Ascending aorta (tissue), 2 donors: ENCODE measurements at regions of chr19 and their contacts with region 1.

Region 1: DNA sequence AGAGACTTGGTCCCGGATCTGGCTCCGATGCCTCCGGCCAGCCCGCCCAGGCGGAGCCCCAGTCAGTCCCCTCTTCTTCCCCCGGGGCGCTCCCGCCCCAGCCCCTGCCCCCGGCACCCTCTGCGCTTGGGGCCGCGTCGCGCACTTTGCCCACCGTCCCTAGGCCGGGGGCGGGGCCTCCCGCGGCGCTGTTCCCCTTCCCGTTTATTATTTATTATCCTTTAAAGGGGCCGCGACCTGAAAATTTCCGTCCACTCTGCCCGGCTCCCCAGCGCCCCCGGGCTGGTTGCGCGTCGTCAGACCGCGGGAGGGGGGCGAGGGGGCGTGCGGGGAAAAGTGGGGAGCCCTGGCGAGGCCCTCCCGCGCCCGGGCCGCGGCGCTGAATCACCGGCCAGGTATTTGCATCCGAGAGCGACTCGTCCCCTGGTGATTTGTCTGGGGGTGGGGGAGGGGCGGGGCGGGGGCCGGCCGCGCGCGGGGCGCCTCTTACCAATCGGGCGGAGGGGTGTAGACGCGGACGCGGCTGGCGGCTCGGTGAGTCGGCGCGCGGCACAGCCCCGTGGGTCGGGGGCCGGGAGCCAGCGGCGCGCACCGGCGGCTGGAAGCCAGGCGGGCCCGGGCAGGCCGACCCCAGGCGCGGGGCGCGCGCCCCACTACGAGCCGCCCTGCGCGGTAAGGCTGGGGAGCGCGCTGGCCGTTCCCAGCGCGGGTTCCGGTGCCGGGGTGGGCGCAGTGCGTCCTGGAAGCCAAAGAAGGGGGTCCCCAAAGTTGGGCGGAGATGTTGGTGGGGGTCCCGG is at the start of gene ARID3A:
- DNase-seq: peak in 1 of 2 donors; percentile 88
- H3K4me3 ChIP-seq: peak within 1 kb of the TSS; percentile 95 to 98
- H3K27ac ChIP-seq: peak within 1 kb of the TSS; percentile 59 to 71
- H3K4me1 ChIP-seq: peaks cover 5 to 16% of the 10 kb centered on the region in 2 donors
- H3K27me3 ChIP-seq: no peaks in the 10 kb centered on the region
- CTCF ChIP-seq: no peak
- total RNA-seq, gene ARID3A: 55.3 TPM

Region 2: DNA sequence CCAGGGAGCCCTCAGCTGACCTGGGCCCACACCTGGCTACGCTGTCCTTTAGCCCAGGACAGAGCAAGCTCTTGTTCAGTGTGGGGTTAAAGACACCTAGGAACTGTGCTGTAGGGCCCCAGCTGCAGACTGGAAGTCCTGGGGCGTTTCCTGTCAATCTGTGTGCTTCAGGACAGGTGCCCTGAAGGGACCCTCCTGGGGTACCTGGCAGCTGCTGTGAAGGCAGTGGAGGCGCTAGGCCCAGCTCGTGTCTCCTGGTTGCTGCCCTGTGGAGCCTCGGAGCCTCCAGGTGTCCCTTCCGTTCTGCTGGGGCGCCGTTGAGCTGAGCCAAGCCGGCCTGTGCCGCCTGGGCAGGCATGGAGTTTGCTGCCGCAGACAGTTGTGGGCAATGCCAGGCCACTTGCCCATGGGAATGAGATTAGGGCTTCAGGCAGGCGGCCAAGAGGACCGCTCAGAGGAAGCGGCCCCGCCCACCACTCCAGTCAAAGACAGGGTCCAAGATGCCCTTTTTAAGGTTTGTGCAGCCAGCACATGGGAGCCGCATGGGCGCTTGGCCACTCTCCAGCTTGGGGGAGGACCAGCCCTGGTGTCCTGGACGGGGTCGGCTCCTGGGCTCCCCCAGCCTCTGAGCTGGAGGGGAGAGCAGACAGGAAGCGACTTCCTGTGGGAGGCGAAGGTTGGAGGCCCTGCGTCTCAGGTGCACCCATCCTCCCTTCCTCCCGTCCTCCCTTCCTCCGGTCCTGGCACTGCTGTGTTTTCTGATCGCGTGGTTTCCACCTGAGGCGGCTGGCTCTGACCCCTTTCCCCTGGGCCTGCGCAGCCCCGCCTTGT is 124.5 kb before region 1 on chr19:
- intact Hi-C with region 1: no loop called
- DNase-seq: peak; percentile 30 to 82
- H3K4me3 ChIP-seq: peak overlapping the region; percentile 39 to 52
- H3K27ac ChIP-seq: peak overlapping the region; percentile 21 to 54
- H3K4me1 ChIP-seq: peaks cover 38 to 51% of the 10 kb centered on the region in 2 donors
- H3K27me3 ChIP-seq: no peaks in the 10 kb centered on the region
- CTCF ChIP-seq: no peak

Region 3: DNA sequence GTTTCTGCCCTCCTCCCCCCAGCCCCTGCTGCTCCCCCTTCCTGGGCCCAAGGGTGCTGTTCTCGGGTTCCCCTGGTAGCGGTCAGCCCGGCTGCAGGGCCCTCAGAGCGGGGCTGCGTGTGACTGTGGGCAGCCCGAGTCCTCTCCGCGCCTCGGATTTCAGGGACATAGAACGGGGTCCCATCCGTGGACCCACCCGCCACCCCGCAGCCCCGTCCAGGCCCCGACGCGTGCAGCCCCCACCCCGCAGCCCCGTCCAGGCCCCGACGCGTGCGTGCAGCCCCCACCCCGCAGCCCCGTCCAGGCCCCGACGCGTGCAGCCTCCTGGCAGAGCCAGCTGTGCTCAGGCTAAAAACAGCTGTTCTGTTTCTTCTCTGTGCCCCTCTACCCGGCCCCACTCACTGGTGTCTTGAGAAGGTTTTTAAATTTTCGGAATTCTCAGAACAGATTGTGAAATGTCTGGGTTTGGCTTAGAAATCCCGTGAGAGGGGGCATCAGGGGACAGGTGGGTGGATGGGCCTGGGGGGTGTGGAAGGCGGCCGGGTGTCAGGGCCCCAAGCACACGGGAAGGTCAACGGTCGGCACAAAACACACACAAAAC is 90.4 kb before region 1 on chr19:
- intact Hi-C with region 1: no loop called
- DNase-seq: no peak
- H3K4me3 ChIP-seq: no peak overlapping the region
- H3K27ac ChIP-seq: no peak overlapping the region
- H3K4me1 ChIP-seq: no peaks in the 10 kb centered on the region
- H3K27me3 ChIP-seq: peaks cover 4% of the 10 kb centered on the region
- CTCF ChIP-seq: no peak

Region 4: GRCh38 chr19:940591-941291 is 15.0 kb after region 1 on chr19:
- intact Hi-C with region 1: loop called (anchors 1 kb)
- DNase-seq: peak; percentile 63 to 90
- H3K4me3 ChIP-seq: peak overlapping the region; percentile 48 to 58
- H3K27ac ChIP-seq: peak overlapping the region; percentile 88
- H3K4me1 ChIP-seq: peaks cover 0 to 15% of the 10 kb centered on the region in 2 donors
- H3K27me3 ChIP-seq: no peaks in the 10 kb centered on the region
- CTCF ChIP-seq: no peak

Region 5: DNA sequence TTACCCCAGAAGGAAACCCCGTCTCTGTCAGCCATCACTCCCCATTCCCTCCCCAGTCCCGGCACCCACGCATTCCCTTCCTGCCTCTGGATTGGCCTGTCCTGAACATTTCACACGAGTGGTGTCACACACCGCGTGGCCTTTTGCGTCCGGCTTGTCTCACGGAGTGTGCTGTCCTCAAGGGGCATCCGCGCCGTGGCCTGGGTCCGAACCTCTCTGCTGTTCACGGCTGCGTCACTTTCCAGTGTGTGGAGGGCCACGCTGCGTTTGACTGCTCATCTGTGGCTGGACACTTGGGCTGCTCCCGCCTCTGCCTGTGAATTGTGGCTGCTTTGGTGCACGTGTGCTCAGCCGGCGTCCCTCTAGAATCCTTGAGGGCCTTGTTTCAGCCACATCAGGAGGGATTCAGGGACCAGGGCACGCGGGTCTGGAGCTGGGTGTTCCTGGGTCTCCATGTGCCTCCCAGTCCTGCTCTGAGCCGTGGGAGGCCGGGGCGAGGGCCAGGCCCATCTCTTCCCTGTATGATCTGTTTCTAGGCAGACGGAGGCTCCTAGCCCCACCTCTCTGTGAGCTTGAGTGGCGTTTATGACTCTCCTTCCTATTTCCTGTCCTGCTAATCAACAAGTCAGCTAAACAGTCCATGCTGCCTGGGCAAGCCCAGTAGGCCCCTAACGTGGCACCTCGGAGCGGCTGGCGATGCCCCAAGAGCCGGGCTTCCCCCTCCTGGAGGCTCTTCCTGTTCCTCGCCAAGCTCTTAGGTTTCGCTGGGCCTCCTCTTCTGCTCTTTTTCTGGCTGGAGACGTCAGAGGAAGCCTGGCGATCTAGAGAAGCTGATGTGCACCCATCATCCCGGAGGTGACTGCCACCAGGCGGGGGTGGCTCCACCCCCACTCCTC is 287.9 kb after region 1 on chr19:
- intact Hi-C with region 1: loop called (anchors 10 kb)
- DNase-seq: peak; percentile 65 to 88
- H3K4me3 ChIP-seq: peak overlapping the region; percentile 38 to 49
- H3K27ac ChIP-seq: peak overlapping the region; percentile 92 to 98
- H3K4me1 ChIP-seq: peaks cover 29 to 73% of the 10 kb centered on the region in 2 donors
- H3K27me3 ChIP-seq: no peaks in the 10 kb centered on the region
- CTCF ChIP-seq: no peak

Region 6: DNA sequence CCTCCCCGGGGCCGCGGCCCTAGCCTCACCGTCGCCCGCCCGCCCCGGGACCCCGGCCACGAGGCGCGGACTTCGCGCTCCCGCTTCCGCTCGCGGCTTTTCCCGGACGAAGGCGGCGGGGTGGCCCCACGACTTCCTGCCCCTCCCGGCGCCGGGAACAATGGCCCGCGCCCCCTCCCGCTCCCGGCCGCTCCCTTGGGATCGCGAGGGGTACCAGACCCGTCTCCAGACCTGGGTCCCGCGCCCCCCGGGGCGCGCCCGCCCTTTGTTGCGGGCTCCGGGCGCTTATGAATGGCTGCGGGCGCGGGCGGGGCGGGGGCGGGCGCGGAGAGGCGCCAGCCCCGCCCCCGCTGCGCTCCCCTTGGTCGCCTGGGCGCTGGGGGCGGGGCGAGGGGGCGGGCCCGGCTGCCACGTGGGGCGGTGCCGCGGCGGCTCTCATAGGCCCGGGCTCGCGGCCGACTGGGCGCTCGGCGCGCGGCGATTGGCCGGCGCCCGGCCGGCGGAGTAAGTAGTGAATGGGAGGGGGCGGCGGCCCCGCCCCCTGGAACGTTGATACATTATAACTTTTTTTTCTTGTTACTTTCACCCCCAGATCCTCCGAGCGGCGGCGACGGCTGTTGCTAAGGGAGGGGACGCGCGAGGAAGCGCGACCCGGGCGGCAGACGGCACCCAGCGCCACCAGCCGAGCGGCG is 323.7 kb after region 1 on chr19:
- intact Hi-C with region 1: loop called (anchors 10 kb)
- DNase-seq: peak; percentile 91 to 98
- H3K4me3 ChIP-seq: peak overlapping the region; percentile 95
- H3K27ac ChIP-seq: peak overlapping the region; percentile 94 to 99
- H3K4me1 ChIP-seq: peaks cover 32 to 45% of the 10 kb centered on the region in 2 donors
- H3K27me3 ChIP-seq: no peaks in the 10 kb centered on the region
- CTCF ChIP-seq: no peak

Region 7: DNA sequence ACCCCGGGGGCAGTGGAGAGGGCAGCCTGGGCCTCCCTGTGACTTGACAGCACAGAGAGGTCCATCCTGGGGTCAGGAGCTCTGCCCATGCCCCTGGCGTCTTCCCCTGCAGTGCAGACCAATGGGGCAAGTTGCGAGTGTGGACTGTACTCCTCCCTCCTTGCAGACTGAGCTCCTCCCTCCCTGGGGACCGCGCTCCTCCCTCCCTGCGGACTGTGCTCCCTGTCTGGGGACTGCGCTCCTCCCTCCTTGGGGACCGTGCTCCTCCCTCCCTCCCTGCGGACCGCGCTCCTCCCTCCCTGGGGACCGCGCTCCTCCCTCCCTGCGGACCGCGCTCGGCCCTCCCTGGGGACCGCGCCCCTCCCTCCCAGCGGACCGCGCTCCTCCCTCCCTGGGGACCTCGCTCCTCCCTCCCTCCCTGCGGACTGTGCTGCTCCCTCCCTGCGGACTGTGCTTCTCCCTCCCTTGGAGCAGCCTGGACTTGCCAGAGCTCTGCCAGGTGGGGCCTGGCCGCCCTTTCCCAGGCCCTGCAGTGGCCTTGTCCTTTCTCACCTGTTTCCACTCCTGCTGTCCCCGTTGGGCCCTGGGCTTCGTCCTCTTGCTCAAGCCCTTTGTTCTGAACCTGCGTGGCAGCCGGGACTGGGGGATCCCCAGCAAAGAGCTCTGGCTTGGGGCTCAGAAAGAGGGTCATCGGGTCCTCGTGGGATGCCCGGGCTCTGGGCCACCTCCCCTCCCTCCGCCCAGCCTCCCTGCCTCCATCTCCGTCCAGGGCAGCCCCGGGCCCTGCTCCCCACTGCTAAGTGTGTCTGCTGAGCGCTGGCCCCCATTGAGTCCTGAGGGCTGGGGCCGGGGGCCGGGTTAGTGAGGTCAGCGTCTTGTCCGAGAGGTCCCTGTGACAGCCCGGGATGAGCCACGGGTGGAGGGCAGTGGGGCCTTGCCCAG is 468.8 kb after region 1 on chr19:
- intact Hi-C with region 1: no loop called
- DNase-seq: no peak
- H3K4me3 ChIP-seq: no peak overlapping the region
- H3K27ac ChIP-seq: no peak overlapping the region
- H3K4me1 ChIP-seq: peaks cover 0 to 5% of the 10 kb centered on the region in 2 donors
- H3K27me3 ChIP-seq: no peaks in the 10 kb centered on the region
- CTCF ChIP-seq: no peak